ENCODE measurements at regions of chr9 and their contacts with region 1.

Region 1: DNA sequence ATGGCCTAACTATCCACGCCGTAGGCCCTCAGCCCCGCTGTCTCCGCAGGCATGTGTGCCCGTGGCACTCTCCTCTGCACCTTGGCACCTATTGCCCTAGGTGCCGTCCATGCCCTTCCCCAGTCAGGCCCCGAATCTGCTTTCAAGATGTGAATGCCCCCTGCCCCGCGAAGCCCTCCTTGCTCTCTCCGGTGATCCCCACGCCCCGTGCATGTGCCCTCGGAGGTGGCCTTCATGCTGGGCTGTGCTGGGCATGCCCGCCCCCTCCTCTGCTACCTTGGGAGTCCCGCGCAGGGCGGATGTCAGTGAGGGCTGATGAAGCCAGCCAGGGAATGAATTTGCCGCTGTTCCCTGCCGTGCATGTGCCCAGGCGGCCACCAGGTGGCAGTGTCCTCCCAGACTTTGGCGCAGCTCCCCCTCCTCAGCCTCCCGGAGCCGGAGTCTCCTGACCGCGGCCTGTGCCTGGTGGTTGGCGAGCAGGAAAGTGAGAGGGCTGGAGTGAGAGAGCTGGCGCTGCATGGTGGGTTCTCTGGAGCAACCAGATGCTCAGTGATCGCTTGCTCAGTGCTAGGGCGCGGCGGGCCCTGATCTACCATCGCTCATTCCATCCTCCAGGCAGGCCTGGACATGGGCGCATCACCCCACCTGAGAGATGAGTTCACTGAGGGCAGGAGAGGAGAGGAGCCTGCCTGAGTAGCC is 112.9 kb upstream of the LMX1B start:
- DNase-seq: peak; percentile 50
- ATAC-seq: peak; percentile 77
- H3K4me3 ChIP-seq: no peak overlapping the region
- H3K27ac ChIP-seq: no peak overlapping the region
- H3K4me1 ChIP-seq: no peaks in the 10 kb centered on the region
- H3K27me3 ChIP-seq: no peaks in the 10 kb centered on the region
- CTCF ChIP-seq: peak; percentile 90

Region 2: GRCh38 chr9:126128494-126129142 is 372.2 kb before region 1 on chr9:
- CTCF ChIA-PET with region 1: interaction called, 10 read pairs
- POLR2A ChIA-PET with region 1: no interaction called
- in situ Hi-C with region 1: no loop called
- intact Hi-C with region 1: no loop called
- DNase-seq: no peak
- ATAC-seq: no peak
- H3K4me3 ChIP-seq: no peak overlapping the region
- H3K27ac ChIP-seq: no peak overlapping the region
- H3K4me1 ChIP-seq: no peaks in the 10 kb centered on the region
- H3K27me3 ChIP-seq: no peaks in the 10 kb centered on the region; the same call in 1 of the 2 replicates
- CTCF ChIP-seq: no peak

Region 3: DNA sequence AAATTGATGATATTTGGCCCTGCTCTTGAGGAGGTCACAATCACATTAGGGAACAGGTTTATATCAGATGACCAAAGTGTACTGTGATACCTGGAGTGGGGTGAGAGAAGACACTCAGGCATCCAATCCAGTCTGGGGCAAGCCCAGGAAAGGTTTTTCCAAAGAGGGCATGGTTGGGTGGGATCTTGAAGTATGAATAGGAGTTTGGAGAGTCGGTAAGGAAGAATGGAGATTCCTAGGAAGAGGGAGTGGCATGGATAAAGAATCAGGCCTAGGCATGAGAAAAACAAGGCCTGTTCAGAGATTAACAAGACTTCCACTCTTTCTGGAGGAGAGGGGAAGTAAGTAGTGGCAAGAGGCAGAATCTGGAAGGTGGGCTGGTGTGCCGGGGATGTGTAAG is 83.1 kb before region 1 on chr9:
- CTCF ChIA-PET with region 1: interaction called, 10 read pairs
- POLR2A ChIA-PET with region 1: no interaction called
- in situ Hi-C with region 1: no loop called
- intact Hi-C with region 1: no loop called
- DNase-seq: no peak
- ATAC-seq: no peak
- H3K4me3 ChIP-seq: no peak overlapping the region
- H3K27ac ChIP-seq: no peak overlapping the region
- H3K4me1 ChIP-seq: peaks cover 3% of the 10 kb centered on the region; the same call in 1 of the 2 replicates
- H3K27me3 ChIP-seq: no peaks in the 10 kb centered on the region
- CTCF ChIP-seq: no peak

Region 4: GRCh38 chr9:126511411-126511810 is 10.6 kb after region 1 on chr9:
- CTCF ChIA-PET with region 1: no interaction called
- POLR2A ChIA-PET with region 1: no interaction called
- in situ Hi-C with region 1: no loop called
- intact Hi-C with region 1: no loop called
- DNase-seq: no peak
- ATAC-seq: no peak
- H3K4me3 ChIP-seq: no peak overlapping the region
- H3K27ac ChIP-seq: no peak overlapping the region
- H3K4me1 ChIP-seq: peaks cover 5% of the 10 kb centered on the region; the same call in 1 of the 2 replicates
- H3K27me3 ChIP-seq: no peaks in the 10 kb centered on the region
- CTCF ChIP-seq: no peak

Region 5: GRCh38 chr9:126558051-126558665 is 57.3 kb after region 1 on chr9:
- CTCF ChIA-PET with region 1: interaction called, 4 read pairs
- POLR2A ChIA-PET with region 1: no interaction called
- in situ Hi-C with region 1: no loop called
- intact Hi-C with region 1: loop called (anchors 2 kb)
- DNase-seq: peak; percentile 53
- ATAC-seq: peak; percentile 85
- H3K4me3 ChIP-seq: no peak overlapping the region
- H3K27ac ChIP-seq: no peak overlapping the region
- H3K4me1 ChIP-seq: no peaks in the 10 kb centered on the region
- H3K27me3 ChIP-seq: peaks cover 14% of the 10 kb centered on the region
- CTCF ChIP-seq: peak; percentile 87

Region 6: GRCh38 chr9:126745574-126746411 is 245.0 kb after region 1 on chr9:
- CTCF ChIA-PET with region 1: no interaction called
- POLR2A ChIA-PET with region 1: no interaction called
- in situ Hi-C with region 1: no loop called
- intact Hi-C with region 1: no loop called
- DNase-seq: no peak
- ATAC-seq: no peak
- H3K4me3 ChIP-seq: no peak overlapping the region
- H3K27ac ChIP-seq: no peak overlapping the region
- H3K4me1 ChIP-seq: no peaks in the 10 kb centered on the region
- H3K27me3 ChIP-seq: no peaks in the 10 kb centered on the region; the same call in none of the 2 replicates
- CTCF ChIP-seq: no peak

Region 7: GRCh38 chr9:126781186-126782052 is 280.6 kb after region 1 on chr9:
- CTCF ChIA-PET with region 1: no interaction called
- POLR2A ChIA-PET with region 1: no interaction called
- in situ Hi-C with region 1: no loop called
- intact Hi-C with region 1: loop called (anchors 5 kb)
- DNase-seq: no peak
- ATAC-seq: peak; percentile 96
- H3K4me3 ChIP-seq: peak overlapping the region; percentile 11 to 36; a peak in 3 of 4 replicates
- H3K27ac ChIP-seq: no peak overlapping the region
- H3K4me1 ChIP-seq: peaks cover 2% of the 10 kb centered on the region; the same call in 1 of the 2 replicates
- H3K27me3 ChIP-seq: no peaks in the 10 kb centered on the region
- CTCF ChIP-seq: peak; percentile 84